Breast epithelium (tissue), 4 donors: ENCODE measurements at regions of chr1 and their contacts with region 1.

Region 1: GRCh38 chr1:162527324-162527723 is 29.7 kb downstream of the UHMK1 start:
- DNase-seq: no peak
- H3K4me3 ChIP-seq: no peak overlapping the region
- H3K27ac ChIP-seq: no peak overlapping the region
- H3K4me1 ChIP-seq: no peaks in the 10 kb centered on the region
- H3K27me3 ChIP-seq: no peaks in the 10 kb centered on the region
- CTCF ChIP-seq: no peak
- POLR2A ChIP-seq: no peak

Region 2: GRCh38 chr1:162046921-162047320 is 480.4 kb before region 1 on chr1:
- intact Hi-C with region 1: no loop called
- DNase-seq: no peak
- H3K4me3 ChIP-seq: no peak overlapping the region
- H3K27ac ChIP-seq: no peak overlapping the region
- H3K4me1 ChIP-seq: no peaks in the 10 kb centered on the region
- H3K27me3 ChIP-seq: no peaks in the 10 kb centered on the region
- CTCF ChIP-seq: no peak
- POLR2A ChIP-seq: no peak

Region 3: GRCh38 chr1:163221304-163221703 is 694.0 kb after region 1 on chr1:
- intact Hi-C with region 1: loop called (anchors 5 kb)
- DNase-seq: no peak
- H3K4me3 ChIP-seq: no peak overlapping the region
- H3K27ac ChIP-seq: no peak overlapping the region
- H3K4me1 ChIP-seq: no peaks in the 10 kb centered on the region
- H3K27me3 ChIP-seq: no peaks in the 10 kb centered on the region
- CTCF ChIP-seq: no peak
- POLR2A ChIP-seq: no peak